PC-3 (cell line): ENCODE measurements at regions of chr2 and their contacts with region 1.

Region 1: DNA sequence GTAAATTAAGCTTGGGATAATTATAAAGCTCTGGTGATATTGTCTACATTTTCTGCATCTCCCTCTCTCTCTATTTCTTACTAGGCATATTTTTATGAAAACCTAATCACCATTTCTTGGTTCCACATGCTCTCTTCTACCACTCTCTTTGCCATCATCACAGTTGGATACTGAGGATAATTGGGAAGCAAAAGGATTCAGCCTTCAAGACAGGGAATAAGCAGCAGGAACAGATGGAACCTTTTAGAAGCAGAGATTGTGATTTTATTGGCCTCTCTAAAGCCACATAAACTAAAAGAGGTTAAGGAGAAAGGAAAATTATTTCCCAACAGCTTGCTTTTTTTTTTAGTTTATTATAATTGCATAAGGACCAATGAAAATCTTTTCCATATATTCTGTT is 226.3 kb upstream of the SPHKAP start:
- DNase-seq: no peak
- ATAC-seq: no peak
- H3K4me3 ChIP-seq: no peak overlapping the region
- H3K27ac ChIP-seq: no peak overlapping the region
- H3K4me1 ChIP-seq: peaks cover 15% of the 10 kb centered on the region
- H3K27me3 ChIP-seq: no peaks in the 10 kb centered on the region
- CTCF ChIP-seq: no peak

Region 2: DNA sequence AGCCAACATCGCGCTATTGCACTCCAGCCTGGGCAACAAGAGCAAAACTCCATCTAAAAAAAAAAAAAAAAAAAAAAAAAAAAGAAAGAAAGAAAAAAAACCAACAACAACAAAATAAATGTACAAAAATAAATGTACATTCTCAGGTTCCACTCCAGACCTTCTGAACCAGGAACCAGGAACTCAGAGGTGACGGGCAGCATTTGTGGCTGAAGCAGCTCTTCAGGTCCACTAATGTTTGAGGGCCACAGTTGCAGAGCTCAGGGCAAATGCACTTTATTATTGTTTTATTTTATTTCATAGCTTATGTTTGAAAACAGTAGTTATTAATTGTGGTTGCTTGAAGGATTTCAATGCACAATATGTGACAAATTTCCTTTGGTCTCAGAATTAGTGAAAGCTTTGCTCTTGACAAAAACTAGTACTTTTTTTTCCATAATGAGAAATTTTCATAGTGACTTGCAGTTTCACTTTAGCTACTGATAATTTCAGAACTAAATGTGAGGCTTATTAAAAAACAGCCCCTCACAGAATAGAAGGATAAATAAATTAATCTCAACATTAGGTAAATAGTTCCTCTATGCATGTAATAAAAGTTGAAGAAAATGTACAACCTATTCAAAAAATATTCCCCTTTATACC is 152.1 kb after region 1 on chr2:
- CTCF ChIA-PET with region 1: no interaction called
- POLR2A ChIA-PET with region 1: no interaction called
- intact Hi-C with region 1: loop called (anchors 5 kb)
- DNase-seq: no peak
- ATAC-seq: no peak
- H3K4me3 ChIP-seq: no peak overlapping the region
- H3K27ac ChIP-seq: no peak overlapping the region
- H3K4me1 ChIP-seq: peaks cover 12% of the 10 kb centered on the region
- H3K27me3 ChIP-seq: no peaks in the 10 kb centered on the region
- CTCF ChIP-seq: no peak